Activated T-helper 2 cell treated with anti-CD3 and anti-CD28 coated beads, Interferon-gamma antibody, Interleukin-2, Interleukin-4, amounts not matched to agents 10 μg/mL and 5 μg/mL and 100 μg/mL, durations not matched to agents 14 hours and 24 hours and 36 hours (primary cell): ENCODE measurements at regions of chr11 and their contacts with region 1.

Region 1: GRCh38 chr11:27362749-27363575 is at the start of gene CCDC34:
- DNase-seq: peak; percentile 84
- H3K4me3 Mint-ChIP-seq: peak within 1 kb of the TSS; percentile 93
- H3K27ac Mint-ChIP-seq: peak within 1 kb of the TSS; percentile 85
- H3K4me1 Mint-ChIP-seq: peaks cover 21% of the 10 kb centered on the region
- H3K27me3 Mint-ChIP-seq: peaks cover 8% of the 10 kb centered on the region
- total RNA-seq, gene CCDC34: 9.3 and 10.8 TPM in 2 replicates

Region 2: GRCh38 chr11:26014451-26015115 is 1348.4 kb before region 1 on chr11:
- intact Hi-C with region 1: no loop called
- DNase-seq: no peak
- H3K4me3 Mint-ChIP-seq: no peak overlapping the region
- H3K27ac Mint-ChIP-seq: no peak overlapping the region
- H3K4me1 Mint-ChIP-seq: no peaks in the 10 kb centered on the region
- H3K27me3 Mint-ChIP-seq: no peaks in the 10 kb centered on the region

Region 3: GRCh38 chr11:27076121-27076589 is 286.8 kb before region 1 on chr11:
- intact Hi-C with region 1: no loop called
- DNase-seq: no peak
- H3K4me3 Mint-ChIP-seq: no peak overlapping the region
- H3K27ac Mint-ChIP-seq: no peak overlapping the region
- H3K4me1 Mint-ChIP-seq: no peaks in the 10 kb centered on the region
- H3K27me3 Mint-ChIP-seq: no peaks in the 10 kb centered on the region

Region 4: GRCh38 chr11:27277843-27278242 is 85.1 kb before region 1 on chr11:
- intact Hi-C with region 1: no loop called
- DNase-seq: no peak
- H3K4me3 Mint-ChIP-seq: no peak overlapping the region
- H3K27ac Mint-ChIP-seq: no peak overlapping the region
- H3K4me1 Mint-ChIP-seq: peaks cover 14% of the 10 kb centered on the region
- H3K27me3 Mint-ChIP-seq: peaks cover 15% of the 10 kb centered on the region

Region 5: DNA sequence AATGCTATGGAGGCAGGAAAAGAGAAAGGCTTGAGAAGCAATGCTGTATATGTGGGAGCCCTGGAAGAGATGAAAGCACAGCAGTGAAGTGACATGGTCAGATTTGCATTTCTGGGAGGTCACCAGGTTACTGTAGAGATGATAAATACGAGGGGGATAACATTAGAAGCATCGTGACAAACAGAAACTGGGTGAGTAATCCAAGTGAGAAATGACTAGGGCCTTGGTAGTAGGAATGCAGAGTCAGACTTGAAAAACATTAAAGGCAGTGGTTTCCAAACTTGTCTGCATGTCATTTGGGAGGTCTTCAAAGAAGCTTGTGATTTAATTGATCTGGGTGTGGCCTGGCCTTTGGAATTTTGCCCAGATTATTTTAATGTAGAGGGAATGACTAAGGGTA is 43.9 kb before region 1 on chr11:
- intact Hi-C with region 1: loop called (anchors 5 kb)
- DNase-seq: no peak
- H3K4me3 Mint-ChIP-seq: no peak overlapping the region
- H3K27ac Mint-ChIP-seq: no peak overlapping the region
- H3K4me1 Mint-ChIP-seq: peaks cover 10% of the 10 kb centered on the region
- H3K27me3 Mint-ChIP-seq: peaks cover 18% of the 10 kb centered on the region

Region 6: DNA sequence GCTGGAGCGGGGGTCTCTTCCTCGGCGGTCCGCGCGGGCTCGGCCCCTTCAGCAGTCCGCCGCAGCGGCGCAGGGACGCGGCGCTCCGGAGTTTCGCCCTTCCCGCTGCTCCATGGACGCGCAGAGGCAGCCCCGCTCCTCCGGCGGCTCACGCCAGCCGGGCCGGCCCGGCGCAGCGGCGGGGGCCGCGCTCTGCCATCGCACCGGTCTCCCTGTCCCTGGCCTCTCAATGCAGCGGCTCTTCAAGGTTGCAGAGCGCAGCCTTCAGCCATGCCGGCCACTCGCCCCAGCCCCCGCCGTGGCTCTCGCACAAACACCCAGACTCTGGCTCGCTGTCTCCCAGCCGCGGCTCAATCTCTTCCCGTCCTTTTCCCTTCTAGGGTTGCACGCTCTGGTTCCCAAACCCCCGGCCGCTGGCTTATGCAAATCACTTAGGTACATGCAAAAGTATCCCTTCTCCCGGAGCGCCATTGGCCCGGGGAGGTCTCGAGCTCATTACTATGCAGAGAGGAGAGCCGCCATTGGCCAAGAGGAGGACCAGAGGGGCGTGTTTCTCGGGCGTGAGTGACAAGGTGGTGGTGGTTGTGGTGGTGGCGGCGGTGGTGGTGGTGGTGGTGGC is 109.5 kb after region 1 on chr11 and contains the start of gene LGR4:
- intact Hi-C with region 1: loop called (anchors 5 kb)
- DNase-seq: peak; percentile 26
- H3K4me3 Mint-ChIP-seq: peak within 1 kb of the TSS; percentile 90
- H3K27ac Mint-ChIP-seq: no peak within 1 kb of the TSS
- H3K4me1 Mint-ChIP-seq: peaks cover 4% of the 10 kb centered on the region
- H3K27me3 Mint-ChIP-seq: peaks cover 70% of the 10 kb centered on the region
- total RNA-seq, gene LGR4: 0.05 and 0.14 TPM in 2 replicates

Region 7: DNA sequence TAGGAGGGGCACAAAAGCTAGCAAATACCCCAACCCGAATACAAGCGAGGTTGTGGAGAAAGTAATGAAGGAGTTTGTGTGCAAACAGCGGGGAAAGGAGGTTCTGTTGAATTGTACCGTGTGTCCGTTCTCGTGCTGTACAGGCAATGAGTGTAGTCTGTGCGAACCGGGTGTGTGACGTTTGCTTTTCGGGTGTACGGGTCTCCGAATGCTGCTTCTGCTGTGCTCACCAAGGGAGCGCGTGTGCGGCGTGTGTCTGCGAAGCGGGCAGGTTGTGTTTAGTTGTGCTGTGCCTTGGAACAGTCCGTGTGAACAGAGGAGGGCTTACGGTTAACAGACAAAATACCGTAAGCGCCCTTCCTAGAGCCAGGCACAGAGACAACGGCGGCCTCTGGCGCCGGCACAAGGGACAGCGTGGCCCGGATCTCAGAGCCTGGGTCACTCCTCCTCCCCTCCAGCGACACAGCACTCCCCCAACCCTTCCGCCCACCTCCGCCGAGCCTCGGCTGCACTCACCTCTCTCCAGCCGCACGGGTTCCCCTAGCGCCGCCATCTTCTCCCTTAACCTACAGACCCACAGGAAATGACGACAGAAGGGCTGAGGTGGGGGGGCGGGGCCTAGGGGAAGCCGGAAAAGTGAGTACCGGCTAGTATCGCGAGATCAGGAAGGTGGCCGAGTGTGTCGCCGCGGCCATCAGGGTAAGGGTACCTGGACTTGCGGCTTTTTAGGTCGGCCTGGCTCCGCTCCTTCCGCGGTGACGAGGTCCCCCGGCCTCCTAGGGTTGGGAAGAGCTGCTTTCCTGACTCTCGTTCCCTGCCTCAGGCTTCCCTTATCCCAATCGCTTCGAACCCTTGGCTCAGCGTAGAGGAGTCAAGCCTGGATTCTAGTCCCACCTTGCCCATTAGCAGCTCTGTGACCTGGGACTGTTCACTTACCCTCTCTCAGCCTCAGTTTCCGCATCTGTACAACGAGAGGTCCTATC is 143.5 kb after region 1 on chr11 and contains the start of gene LIN7C:
- intact Hi-C with region 1: loop called (anchors 1 kb)
- DNase-seq: peak; percentile 83
- H3K4me3 Mint-ChIP-seq: peak within 1 kb of the TSS; percentile 99
- H3K27ac Mint-ChIP-seq: peak within 1 kb of the TSS; percentile 99
- H3K4me1 Mint-ChIP-seq: peaks cover 33% of the 10 kb centered on the region
- H3K27me3 Mint-ChIP-seq: no peaks in the 10 kb centered on the region
- total RNA-seq, gene LIN7C: 29.6 and 31.0 TPM in 2 replicates